Activated CD4-positive, alpha-beta T cell treated with anti-CD3 and anti-CD28 coated beads for 36 hours (primary cell): ENCODE measurements at regions of chr2 and their contacts with region 1.

Region 1: GRCh38 chr2:191030521-191031154 is 16.7 kb upstream of the STAT1 start:
- DNase-seq: peak; percentile 57
- ATAC-seq: peak; percentile 82
- H3K4me3 Mint-ChIP-seq: no peak overlapping the region
- H3K27ac Mint-ChIP-seq: peak overlapping the region; percentile 55
- H3K4me1 Mint-ChIP-seq: peaks cover 38% of the 10 kb centered on the region
- H3K27me3 Mint-ChIP-seq: no peaks in the 10 kb centered on the region

Region 2: GRCh38 chr2:190781604-190782198 is 248.9 kb before region 1 on chr2:
- CTCF ChIA-PET with region 1: interaction called, 5 read pairs
- POLR2A ChIA-PET with region 1: no interaction called
- intact Hi-C with region 1: loop called (anchors 1 to 2 kb)
- DNase-seq: peak; percentile 77
- ATAC-seq: peak; percentile 58
- H3K4me3 Mint-ChIP-seq: no peak overlapping the region
- H3K27ac Mint-ChIP-seq: no peak overlapping the region
- H3K4me1 Mint-ChIP-seq: peaks cover 33% of the 10 kb centered on the region
- H3K27me3 Mint-ChIP-seq: no peaks in the 10 kb centered on the region

Region 3: DNA sequence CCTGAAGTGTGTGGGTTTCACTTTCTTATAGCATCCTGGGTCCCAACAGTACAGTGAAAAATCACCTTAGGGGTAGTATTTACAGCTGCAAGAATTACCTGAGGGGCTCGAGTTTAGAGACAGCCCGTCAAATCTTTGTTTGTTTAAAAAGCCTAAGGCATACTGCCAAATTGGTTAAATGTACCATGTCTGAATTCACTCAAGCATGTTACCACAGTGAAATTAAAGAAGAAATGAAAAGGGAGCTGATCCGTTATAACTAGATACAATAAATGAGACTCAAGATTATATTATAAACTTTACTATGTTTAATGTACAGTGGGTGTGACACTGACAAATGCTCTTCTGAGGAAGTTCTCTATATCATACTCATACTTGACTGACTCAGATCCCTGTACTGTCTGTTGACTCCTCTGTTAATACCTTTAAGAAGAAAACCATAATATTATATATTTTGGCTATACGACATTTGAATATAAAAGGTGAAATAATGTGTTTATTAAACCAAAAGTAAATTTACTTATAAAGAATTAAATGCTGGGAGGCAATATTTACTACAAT is 1056.8 kb after region 1 on chr2:
- CTCF ChIA-PET with region 1: no interaction called
- POLR2A ChIA-PET with region 1: no interaction called
- intact Hi-C with region 1: no loop called
- DNase-seq: no peak
- ATAC-seq: no peak
- H3K4me3 Mint-ChIP-seq: no peak overlapping the region
- H3K27ac Mint-ChIP-seq: no peak overlapping the region
- H3K4me1 Mint-ChIP-seq: no peaks in the 10 kb centered on the region
- H3K27me3 Mint-ChIP-seq: peaks cover 5% of the 10 kb centered on the region